ENCODE measurements at regions of chr2 and their contacts with region 1.

Region 1: DNA sequence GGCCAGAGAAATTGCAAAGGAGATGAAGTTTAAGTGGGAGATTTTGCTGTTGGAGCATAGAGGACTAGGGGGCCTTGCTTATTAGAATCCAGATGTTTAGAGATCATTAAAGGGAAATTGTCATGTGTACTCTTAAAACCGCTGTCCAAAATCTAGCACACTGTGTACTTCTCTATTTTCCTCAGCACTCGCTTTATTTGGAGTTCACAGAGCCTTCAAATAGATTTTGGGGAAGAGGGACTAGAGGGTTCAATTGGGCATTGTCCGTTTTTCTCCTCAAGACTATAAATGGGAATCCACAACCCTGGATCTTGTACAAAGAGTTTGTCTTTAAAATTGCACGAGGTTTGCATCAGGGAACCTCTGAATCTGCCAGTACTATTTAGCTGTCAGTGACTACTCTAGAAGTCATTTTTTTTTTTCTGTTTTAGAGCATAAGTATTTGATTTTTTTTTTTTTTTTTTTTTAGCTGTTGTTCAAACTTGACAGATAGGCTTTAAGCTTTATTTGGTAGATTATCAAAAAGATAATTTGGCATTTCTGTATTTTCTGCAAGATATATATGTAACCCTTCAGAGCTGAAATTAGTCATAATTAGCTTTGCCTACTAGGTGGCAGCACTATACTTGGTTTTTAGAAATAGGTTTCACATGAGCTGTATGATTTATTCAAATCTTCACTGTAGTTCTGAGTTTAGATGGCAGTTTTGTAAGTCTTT is 14.2 kb downstream of the PMS1 start:
- DNase-seq: no peak
- H3K4me3 Mint-ChIP-seq: no peak overlapping the region
- H3K27ac Mint-ChIP-seq: no peak overlapping the region
- H3K4me1 Mint-ChIP-seq: peaks cover 5% of the 10 kb centered on the region
- H3K27me3 Mint-ChIP-seq: no peaks in the 10 kb centered on the region

Region 2: GRCh38 chr2:189854940-189855339 is 56.5 kb after region 1 on chr2:
- intact Hi-C with region 1: loop called (anchors 10 kb)
- DNase-seq: no peak
- H3K4me3 Mint-ChIP-seq: no peak overlapping the region
- H3K27ac Mint-ChIP-seq: no peak overlapping the region
- H3K4me1 Mint-ChIP-seq: peaks cover 2% of the 10 kb centered on the region
- H3K27me3 Mint-ChIP-seq: no peaks in the 10 kb centered on the region

Region 3: DNA sequence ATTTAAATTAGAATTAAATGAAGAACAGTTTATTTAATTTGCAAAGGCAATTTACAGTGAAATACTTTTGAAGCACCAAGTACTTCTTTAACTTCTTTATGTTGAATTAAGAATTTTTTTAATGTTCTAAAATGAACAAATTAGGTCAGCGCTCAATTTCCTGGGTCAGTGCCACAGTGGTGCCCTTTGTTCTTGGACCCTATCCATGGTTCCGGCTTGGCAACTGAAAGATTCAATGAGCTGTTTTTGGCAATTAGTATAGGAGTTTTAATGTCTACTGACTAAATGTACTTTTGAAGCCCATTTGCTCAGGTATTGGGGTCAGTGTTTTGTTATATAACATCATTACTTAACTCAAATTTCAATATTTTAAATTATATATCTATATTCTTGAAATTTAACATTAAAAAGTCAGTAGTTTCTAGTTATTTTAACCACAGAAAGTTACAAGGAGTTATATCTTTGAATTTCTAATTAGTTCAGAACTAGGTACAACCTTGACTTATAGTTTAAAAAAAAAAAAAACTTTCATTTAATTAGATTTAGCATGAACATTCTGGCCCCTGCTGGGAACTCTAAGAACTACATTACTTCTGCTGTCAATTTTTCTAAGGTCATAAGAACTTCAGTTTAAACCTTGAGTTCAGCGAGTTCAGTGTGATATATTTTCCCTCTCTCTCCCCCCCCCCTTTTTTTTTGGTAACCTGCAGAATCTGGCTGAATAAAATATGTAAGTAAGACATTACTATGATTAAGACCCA is 271.6 kb after region 1 on chr2:
- intact Hi-C with region 1: loop called (anchors 2 kb)
- DNase-seq: peak; percentile 75
- H3K4me3 Mint-ChIP-seq: no peak overlapping the region
- H3K27ac Mint-ChIP-seq: no peak overlapping the region
- H3K4me1 Mint-ChIP-seq: no peaks in the 10 kb centered on the region
- H3K27me3 Mint-ChIP-seq: peaks cover 5% of the 10 kb centered on the region

Measured in activated CD4-positive, alpha-beta T cell treated with anti-CD3 and anti-CD28 coated beads, Interleukin-2, amount 10 ng/mL, durations not matched to agents 24 days and 14 days (primary cell).